Tibial artery (tissue), 4 donors: ENCODE measurements at regions of chr12 and their contacts with region 1.

Region 1: DNA sequence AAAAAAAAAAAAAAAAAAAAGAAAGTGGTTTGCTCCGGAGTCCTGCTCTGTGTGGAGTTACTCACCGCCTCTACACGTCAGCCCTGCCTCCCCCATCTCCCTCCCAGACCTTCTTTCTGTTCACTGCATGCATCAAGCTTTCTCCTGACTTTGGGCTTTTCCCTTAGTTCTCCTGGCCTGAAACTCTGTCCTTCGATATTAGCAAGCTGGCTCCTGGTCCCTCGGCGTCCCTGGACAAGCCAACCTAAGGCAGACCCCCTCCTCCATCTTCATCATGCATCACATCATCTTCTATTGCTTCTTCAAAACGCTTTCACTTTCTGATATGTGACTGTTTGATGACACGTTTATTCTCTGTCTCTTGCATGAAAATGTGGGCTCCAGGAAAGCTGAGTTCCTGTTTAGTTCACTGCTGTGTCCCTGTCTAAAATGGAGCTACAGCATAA is 40.6 kb downstream of the SLC15A4 start:
- DNase-seq: no peak
- H3K4me3 ChIP-seq: no peak overlapping the region
- H3K27ac ChIP-seq: no peak overlapping the region
- H3K4me1 ChIP-seq: no peaks in the 10 kb centered on the region
- H3K27me3 ChIP-seq: no peaks in the 10 kb centered on the region
- CTCF ChIP-seq: no peak

Region 2: DNA sequence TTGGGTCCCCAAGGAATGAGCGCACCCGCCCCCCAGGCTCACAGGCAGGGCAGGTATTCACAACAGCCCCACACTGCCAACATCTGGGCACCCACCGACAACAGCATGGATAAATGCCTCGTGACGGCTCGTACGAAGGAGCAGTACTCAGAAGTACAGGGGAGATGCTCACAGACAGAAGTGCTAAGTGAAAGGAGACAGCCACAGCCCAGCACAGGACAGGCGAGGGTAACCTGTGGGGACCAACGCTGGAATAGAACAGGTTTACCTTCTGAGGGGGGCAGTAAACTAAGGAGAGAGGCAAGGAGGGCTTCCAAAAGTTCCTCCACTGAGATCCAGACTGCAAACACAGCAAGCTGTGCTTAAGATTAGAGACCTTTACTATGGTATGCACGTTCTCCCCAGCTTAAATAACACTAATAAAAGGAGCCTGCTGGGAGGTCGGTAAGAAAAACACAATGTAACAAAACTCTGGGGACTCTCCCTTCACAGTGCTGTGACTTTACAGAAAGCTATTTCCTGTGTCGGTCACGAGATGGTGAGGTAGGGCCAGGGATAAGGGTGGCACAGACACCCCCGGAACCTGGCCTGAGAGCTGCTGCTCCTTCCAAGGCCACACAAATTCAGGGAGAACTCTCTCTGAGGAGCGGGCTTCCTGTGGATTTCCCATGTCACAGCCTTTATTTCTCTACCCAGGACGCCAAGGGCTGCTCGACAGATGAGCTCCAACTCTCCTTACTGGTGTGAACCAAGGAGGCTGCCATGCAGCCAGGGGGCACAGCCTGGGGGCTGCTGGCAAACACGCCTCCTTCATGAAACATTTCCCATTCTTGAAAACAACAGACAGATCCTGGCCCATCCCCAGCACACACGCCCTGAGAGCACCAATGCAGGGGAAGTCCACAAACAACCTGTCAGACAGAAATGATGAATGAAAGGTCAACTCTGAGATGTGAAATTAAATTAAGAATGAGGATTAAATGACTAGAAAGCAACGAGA is 14.3 kb after region 1 on chr12:
- intact Hi-C with region 1: no loop called
- DNase-seq: no peak
- H3K4me3 ChIP-seq: no peak overlapping the region
- H3K27ac ChIP-seq: no peak overlapping the region
- H3K4me1 ChIP-seq: peaks cover 0 to 8% (median 7%) of the 10 kb centered on the region in 4 donors
- H3K27me3 ChIP-seq: no peaks in the 10 kb centered on the region
- CTCF ChIP-seq: no peak

Region 3: GRCh38 chr12:128872303-128872702 is 89.2 kb after region 1 on chr12:
- intact Hi-C with region 1: loop called (anchors 10 kb)
- DNase-seq: no peak
- H3K4me3 ChIP-seq: no peak overlapping the region
- H3K27ac ChIP-seq: no peak overlapping the region
- H3K4me1 ChIP-seq: no peaks in the 10 kb centered on the region
- H3K27me3 ChIP-seq: no peaks in the 10 kb centered on the region
- CTCF ChIP-seq: no peak